Psoas muscle (tissue), 8 donors: ENCODE measurements at regions of chr16 and their contacts with region 1.

Region 1: GRCh38 chr16:83826146-83826913 is 18.6 kb downstream of the HSBP1 start:
- DNase-seq: peak; percentile 84 to 94
- ATAC-seq: peak; percentile 92 to 99 (median 96)
- H3K4me3 ChIP-seq: no peak overlapping the region
- H3K27ac ChIP-seq: peak overlapping the region; percentile 38
- H3K4me1 ChIP-seq: no peaks in the 10 kb centered on the region
- H3K27me3 ChIP-seq: no peaks in the 10 kb centered on the region
- CTCF ChIP-seq: peak; percentile 97

Region 2: DNA sequence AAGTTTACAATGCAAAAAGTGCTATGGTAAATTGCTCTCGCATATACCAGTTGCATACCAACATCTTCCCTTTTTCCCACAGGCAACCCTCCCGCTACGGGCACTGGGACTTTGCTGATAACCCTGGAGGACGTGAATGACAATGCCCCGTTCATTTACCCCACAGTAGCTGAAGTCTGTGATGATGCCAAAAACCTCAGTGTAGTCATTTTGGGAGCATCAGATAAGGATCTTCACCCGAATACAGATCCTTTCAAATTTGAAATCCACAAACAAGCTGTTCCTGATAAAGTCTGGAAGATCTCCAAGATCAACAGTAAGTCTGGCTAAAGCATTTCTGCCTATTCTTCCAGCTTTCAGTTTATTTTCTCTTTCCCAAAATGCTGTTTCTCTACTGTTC is 46.4 kb before region 1 on chr16:
- intact Hi-C with region 1: no loop called
- DNase-seq: no peak
- ATAC-seq: no peak
- H3K4me3 ChIP-seq: no peak overlapping the region
- H3K27ac ChIP-seq: no peak overlapping the region
- H3K4me1 ChIP-seq: no peaks in the 10 kb centered on the region
- H3K27me3 ChIP-seq: no peaks in the 10 kb centered on the region
- CTCF ChIP-seq: no peak

Region 3: GRCh38 chr16:83898463-83899271 is 72.3 kb after region 1 on chr16 and contains the start of gene MLYCD:
- intact Hi-C with region 1: loop called in 1 of 2 experiments (anchors 5 kb)
- DNase-seq: peak; percentile 92 to 96
- ATAC-seq: peak; percentile 83 to 89 (median 86)
- H3K4me3 ChIP-seq: peak within 1 kb of the TSS; percentile 71
- H3K27ac ChIP-seq: peak within 1 kb of the TSS; percentile 97
- H3K4me1 ChIP-seq: peaks cover 34% of the 10 kb centered on the region
- H3K27me3 ChIP-seq: no peaks in the 10 kb centered on the region
- CTCF ChIP-seq: no peak
- total RNA-seq, gene MLYCD: 14.7 to 21.6 (median 17.8) TPM

Region 4: GRCh38 chr16:84062734-84063640 is 236.7 kb after region 1 on chr16:
- intact Hi-C with region 1: loop called (anchors 2 to 5 kb)
- DNase-seq: peak; percentile 80 to 87
- ATAC-seq: peak; percentile 84 to 94 (median 88)
- H3K4me3 ChIP-seq: no peak overlapping the region
- H3K27ac ChIP-seq: no peak overlapping the region
- H3K4me1 ChIP-seq: no peaks in the 10 kb centered on the region
- H3K27me3 ChIP-seq: no peaks in the 10 kb centered on the region
- CTCF ChIP-seq: peak; percentile 83

Region 5: DNA sequence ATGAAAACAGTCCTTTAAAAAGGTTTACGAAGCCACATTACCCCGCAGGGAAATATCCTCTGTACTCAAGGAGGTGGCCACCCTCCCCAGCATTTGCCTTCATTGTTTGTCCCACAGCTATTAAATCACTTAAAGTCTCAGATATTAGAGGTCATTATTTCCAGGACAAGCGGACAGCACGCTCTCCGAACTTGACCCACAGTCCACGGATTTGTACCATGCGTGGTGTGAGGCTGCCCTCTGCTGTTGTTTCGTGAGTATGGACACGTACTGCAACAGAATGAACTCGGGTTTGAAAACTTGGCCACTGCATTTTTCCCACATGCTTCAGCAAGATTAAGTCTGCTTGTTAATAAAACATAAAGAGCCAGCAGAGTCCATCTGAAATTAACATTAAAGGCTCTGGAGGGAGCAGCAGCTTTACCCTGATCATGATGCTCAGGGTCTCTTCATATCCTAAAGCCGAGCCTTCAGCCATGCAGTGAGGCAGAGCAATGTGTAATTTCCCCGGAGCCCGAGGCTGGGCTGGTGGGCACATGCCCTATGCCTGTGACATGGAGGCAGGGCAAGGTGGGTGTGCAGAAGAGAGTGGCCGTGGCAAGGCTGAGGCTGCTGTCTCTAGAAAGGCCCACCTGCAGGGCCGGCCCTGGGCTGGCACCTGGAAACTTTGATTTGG is 658.4 kb after region 1 on chr16:
- intact Hi-C with region 1: loop called in 1 of 2 experiments (anchors 10 kb)
- DNase-seq: peak in 1 of 2 donors; percentile 51
- ATAC-seq: peak; percentile 57 to 85 (median 77)
- H3K4me3 ChIP-seq: no peak overlapping the region
- H3K27ac ChIP-seq: no peak overlapping the region
- H3K4me1 ChIP-seq: peaks cover 6% of the 10 kb centered on the region
- H3K27me3 ChIP-seq: no peaks in the 10 kb centered on the region
- CTCF ChIP-seq: peak; percentile 74